T-cell (primary cell): ENCODE measurements at regions of chr3 and their contacts with region 1.

Region 1: DNA sequence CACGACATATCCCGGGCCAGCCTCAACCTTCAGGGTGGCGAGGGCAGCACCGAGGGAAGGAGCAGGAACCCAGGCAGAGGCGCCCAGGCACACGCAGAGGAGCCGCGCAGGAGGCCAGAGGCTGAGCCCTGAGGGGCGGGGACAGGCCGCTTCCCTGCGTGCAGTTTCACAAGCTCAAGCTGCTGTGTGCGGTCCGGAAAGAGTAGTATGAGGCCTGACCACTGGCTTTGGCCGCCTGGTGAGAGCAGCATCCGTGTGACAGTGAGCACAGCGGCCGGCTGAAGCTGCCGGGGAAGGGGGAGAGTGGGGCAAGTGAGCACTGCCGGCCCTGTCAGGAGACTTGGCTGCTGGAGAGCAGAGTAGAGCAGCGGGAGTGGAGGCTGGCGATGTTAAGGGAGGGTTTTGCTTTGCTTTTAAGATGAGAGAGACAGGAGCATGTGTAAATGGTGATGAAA is 8.7 kb downstream of the ZDHHC19 start:
- DNase-seq: no peak
- ATAC-seq: no peak
- H3K4me3 ChIP-seq: no peak overlapping the region
- H3K4me3 Mint-ChIP-seq: no peak overlapping the region
- H3K27ac ChIP-seq: no peak overlapping the region
- H3K27ac Mint-ChIP-seq: no peak overlapping the region
- H3K4me1 ChIP-seq: peaks cover 0 to 8% of the 10 kb centered on the region in 2 experiments
- H3K4me1 Mint-ChIP-seq: peaks cover 0 to 21% (median 5%) of the 10 kb centered on the region in 3 donors
- H3K27me3 ChIP-seq: peaks cover 0 to 3% of the 10 kb centered on the region in 2 experiments
- H3K27me3 Mint-ChIP-seq: no peaks in the 10 kb centered on the region

Region 2: DNA sequence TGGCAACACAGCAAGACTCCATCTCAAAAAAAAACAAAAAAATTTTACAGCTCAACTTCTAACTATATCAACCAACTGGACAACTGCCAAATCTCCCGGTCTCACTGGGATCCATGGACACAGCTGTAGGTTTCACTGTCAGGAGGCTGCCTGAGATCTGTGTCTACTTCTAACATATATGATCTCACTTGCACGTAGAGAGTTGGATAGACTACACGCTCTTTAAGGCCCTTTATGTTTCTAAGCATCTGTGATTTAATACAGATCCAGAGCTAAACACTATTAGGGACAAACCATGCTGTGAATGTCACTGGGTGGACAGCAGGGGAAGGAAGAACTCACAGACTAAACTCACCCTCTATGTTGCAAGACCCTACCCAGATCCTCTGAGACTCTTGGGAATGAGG is 605.8 kb before region 1 on chr3:
- CTCF ChIA-PET with region 1: no interaction called
- POLR2A ChIA-PET with region 1: no interaction called
- DNase-seq: no peak
- ATAC-seq: no peak
- H3K4me3 ChIP-seq: no peak overlapping the region
- H3K4me3 Mint-ChIP-seq: no peak overlapping the region
- H3K27ac ChIP-seq: no peak overlapping the region
- H3K27ac Mint-ChIP-seq: no peak overlapping the region
- H3K4me1 ChIP-seq: no peaks in the 10 kb centered on the region
- H3K4me1 Mint-ChIP-seq: peaks cover 0 to 5% (median 0%) of the 10 kb centered on the region in 3 donors
- H3K27me3 ChIP-seq: no peaks in the 10 kb centered on the region
- H3K27me3 Mint-ChIP-seq: no peaks in the 10 kb centered on the region

Region 3: GRCh38 chr3:196179380-196180308 is 22.9 kb before region 1 on chr3:
- CTCF ChIA-PET with region 1: interaction called in 1 of 2 experiments, 3 read pairs
- POLR2A ChIA-PET with region 1: interaction called, 5 to 12 read pairs
- DNase-seq: peak; percentile 69 to 89 (median 81)
- ATAC-seq: peak; percentile 90 to 94 (median 92)
- H3K4me3 ChIP-seq: peak overlapping the region; percentile 34 to 54
- H3K4me3 Mint-ChIP-seq: peak overlapping the region; percentile 65 to 76 (median 75)
- H3K27ac ChIP-seq: peak overlapping the region; percentile 91
- H3K27ac Mint-ChIP-seq: peak overlapping the region; percentile 97 to 98
- H3K4me1 ChIP-seq: peaks cover 21 to 62% of the 10 kb centered on the region in 2 experiments
- H3K4me1 Mint-ChIP-seq: peaks cover 26 to 57% (median 50%) of the 10 kb centered on the region in 3 donors
- H3K27me3 ChIP-seq: no peaks in the 10 kb centered on the region
- H3K27me3 Mint-ChIP-seq: no peaks in the 10 kb centered on the region